Activated CD4-positive, alpha-beta memory T cell treated with anti-CD3 and anti-CD28 coated beads, Interleukin-2, amount 10 ng/mL, durations not matched to agents 7 days and 5 days (primary cell): ENCODE measurements at regions of chr10 and their contacts with region 1.

Region 1: DNA sequence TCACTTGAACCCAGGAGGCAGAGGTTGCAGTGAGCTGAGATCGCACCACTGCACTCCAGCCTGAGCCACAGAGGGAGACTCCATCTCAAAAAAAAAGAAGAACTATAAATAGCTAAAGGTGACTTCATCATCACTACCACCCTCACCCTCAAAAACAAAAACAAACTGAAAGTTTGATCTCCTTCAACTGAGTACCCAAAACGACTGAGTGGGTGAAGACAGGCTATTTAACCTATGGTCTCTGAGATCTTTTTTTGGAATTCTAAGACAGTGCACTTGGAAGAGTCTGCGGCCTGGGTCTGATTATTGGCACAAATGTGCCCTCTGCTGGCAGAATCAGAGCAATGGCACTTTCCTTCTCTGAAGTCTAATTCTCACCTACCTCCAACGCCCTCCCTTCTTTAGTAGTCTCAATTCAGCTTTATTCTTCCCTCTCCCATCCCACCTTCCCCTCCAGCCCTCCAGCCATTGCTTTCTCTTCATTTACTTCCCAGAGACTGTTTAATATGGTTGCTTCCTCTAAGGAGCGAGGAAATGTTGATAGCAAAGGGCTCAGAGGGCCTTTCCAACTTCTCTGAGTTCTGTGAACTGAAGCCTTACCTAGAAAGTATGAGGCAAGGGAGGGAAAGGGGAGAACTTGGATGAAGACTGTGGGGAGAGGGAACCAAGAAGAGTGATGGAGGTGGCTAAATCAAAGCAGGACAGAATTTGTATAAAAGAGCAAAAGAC is 2.9 kb upstream of the MYOZ1 start:
- DNase-seq: peak; percentile 58
- H3K4me3 Mint-ChIP-seq: no peak overlapping the region
- H3K27ac Mint-ChIP-seq: peak overlapping the region; percentile 7
- H3K4me1 Mint-ChIP-seq: peaks cover 21% of the 10 kb centered on the region
- H3K27me3 Mint-ChIP-seq: no peaks in the 10 kb centered on the region

Region 2: GRCh38 chr10:73263948-73264347 is 380.2 kb before region 1 on chr10:
- CTCF ChIA-PET with region 1: interaction called, 15 read pairs
- POLR2A ChIA-PET with region 1: no interaction called
- DNase-seq: no peak
- H3K4me3 Mint-ChIP-seq: no peak overlapping the region
- H3K27ac Mint-ChIP-seq: no peak overlapping the region
- H3K4me1 Mint-ChIP-seq: peaks cover 9% of the 10 kb centered on the region
- H3K27me3 Mint-ChIP-seq: no peaks in the 10 kb centered on the region

Region 3: GRCh38 chr10:73529089-73529832 is 114.9 kb before region 1 on chr10:
- CTCF ChIA-PET with region 1: interaction called, 122 read pairs
- POLR2A ChIA-PET with region 1: interaction called, 4 read pairs
- DNase-seq: peak; percentile 49
- H3K4me3 Mint-ChIP-seq: no peak overlapping the region
- H3K27ac Mint-ChIP-seq: no peak overlapping the region
- H3K4me1 Mint-ChIP-seq: no peaks in the 10 kb centered on the region
- H3K27me3 Mint-ChIP-seq: no peaks in the 10 kb centered on the region

Region 4: DNA sequence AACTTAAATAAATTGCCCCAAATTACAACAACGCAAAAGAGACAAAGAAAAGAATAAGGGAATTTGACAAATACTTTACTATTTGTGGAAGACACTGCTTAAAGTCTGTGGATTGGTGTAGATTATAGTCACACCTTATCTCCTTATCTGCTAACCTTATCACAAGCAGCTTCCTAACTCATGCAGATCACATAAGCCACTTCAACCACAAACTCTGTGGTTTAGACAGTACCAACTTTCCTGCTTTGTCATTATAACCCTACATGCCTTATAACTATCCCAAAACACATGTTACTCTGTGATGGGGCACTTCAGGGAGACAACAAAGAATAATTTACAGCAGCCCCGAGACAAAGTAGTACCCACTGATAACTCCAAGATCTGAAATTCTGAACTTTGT is 106.9 kb before region 1 on chr10:
- CTCF ChIA-PET with region 1: interaction called, 122 read pairs
- POLR2A ChIA-PET with region 1: interaction called, 7 read pairs
- DNase-seq: no peak
- H3K4me3 Mint-ChIP-seq: no peak overlapping the region
- H3K27ac Mint-ChIP-seq: no peak overlapping the region
- H3K4me1 Mint-ChIP-seq: peaks cover 16% of the 10 kb centered on the region
- H3K27me3 Mint-ChIP-seq: no peaks in the 10 kb centered on the region

Region 5: GRCh38 chr10:73625884-73626752 is 18.1 kb before region 1 on chr10:
- CTCF ChIA-PET with region 1: interaction called, 19 read pairs
- POLR2A ChIA-PET with region 1: interaction called, 4 read pairs
- DNase-seq: peak; percentile 96
- H3K4me3 Mint-ChIP-seq: peak overlapping the region; percentile 98
- H3K27ac Mint-ChIP-seq: peak overlapping the region; percentile 91
- H3K4me1 Mint-ChIP-seq: peaks cover 27% of the 10 kb centered on the region
- H3K27me3 Mint-ChIP-seq: no peaks in the 10 kb centered on the region